Heart left ventricle (tissue), 16 donors: ENCODE measurements at regions of chr9 and their contacts with region 1.

Region 1: GRCh38 chr9:131334629-131335367 is 45.3 kb downstream of the PLPP7 start:
- DNase-seq: peak; percentile 82 to 91 (median 86)
- ATAC-seq: peak; percentile 88 to 92 (median 91)
- H3K4me3 ChIP-seq: no peak overlapping the region
- H3K27ac ChIP-seq: peak overlapping the region; percentile 11 to 93 (median 84)
- H3K4me1 ChIP-seq: peaks cover 0 to 33% (median 15%) of the 10 kb centered on the region in 12 donors
- H3K27me3 ChIP-seq: no peaks in the 10 kb centered on the region
- CTCF ChIP-seq: no peak
- POLR2A ChIP-seq: no peak

Region 2: GRCh38 chr9:131053896-131054295 is 280.9 kb before region 1 on chr9:
- intact Hi-C with region 1: loop called in 8 of 10 experiments (anchors 2 to 10 kb)
- DNase-seq: no peak
- ATAC-seq: no peak
- H3K4me3 ChIP-seq: no peak overlapping the region
- H3K27ac ChIP-seq: no peak overlapping the region
- H3K4me1 ChIP-seq: peaks cover 0 to 6% (median 0%) of the 10 kb centered on the region in 12 donors
- H3K27me3 ChIP-seq: peaks cover 0 to 10% (median 0%) of the 10 kb centered on the region in 9 donors
- CTCF ChIP-seq: no peak
- POLR2A ChIP-seq: no peak

Region 3: GRCh38 chr9:131178382-131178781 is 156.4 kb before region 1 on chr9:
- intact Hi-C with region 1: loop called (anchors 1 to 2 kb)
- DNase-seq: peak; percentile 64 to 83 (median 69)
- ATAC-seq: peak; percentile 82 to 96 (median 94)
- H3K4me3 ChIP-seq: no peak overlapping the region
- H3K27ac ChIP-seq: peak overlapping the region in 1 of 12 donors; percentile 31
- H3K4me1 ChIP-seq: peaks cover 0 to 29% (median 6%) of the 10 kb centered on the region in 12 donors
- H3K27me3 ChIP-seq: no peaks in the 10 kb centered on the region
- CTCF ChIP-seq: peak; percentile 87 to 96 (median 93)
- POLR2A ChIP-seq: no peak

Region 4: DNA sequence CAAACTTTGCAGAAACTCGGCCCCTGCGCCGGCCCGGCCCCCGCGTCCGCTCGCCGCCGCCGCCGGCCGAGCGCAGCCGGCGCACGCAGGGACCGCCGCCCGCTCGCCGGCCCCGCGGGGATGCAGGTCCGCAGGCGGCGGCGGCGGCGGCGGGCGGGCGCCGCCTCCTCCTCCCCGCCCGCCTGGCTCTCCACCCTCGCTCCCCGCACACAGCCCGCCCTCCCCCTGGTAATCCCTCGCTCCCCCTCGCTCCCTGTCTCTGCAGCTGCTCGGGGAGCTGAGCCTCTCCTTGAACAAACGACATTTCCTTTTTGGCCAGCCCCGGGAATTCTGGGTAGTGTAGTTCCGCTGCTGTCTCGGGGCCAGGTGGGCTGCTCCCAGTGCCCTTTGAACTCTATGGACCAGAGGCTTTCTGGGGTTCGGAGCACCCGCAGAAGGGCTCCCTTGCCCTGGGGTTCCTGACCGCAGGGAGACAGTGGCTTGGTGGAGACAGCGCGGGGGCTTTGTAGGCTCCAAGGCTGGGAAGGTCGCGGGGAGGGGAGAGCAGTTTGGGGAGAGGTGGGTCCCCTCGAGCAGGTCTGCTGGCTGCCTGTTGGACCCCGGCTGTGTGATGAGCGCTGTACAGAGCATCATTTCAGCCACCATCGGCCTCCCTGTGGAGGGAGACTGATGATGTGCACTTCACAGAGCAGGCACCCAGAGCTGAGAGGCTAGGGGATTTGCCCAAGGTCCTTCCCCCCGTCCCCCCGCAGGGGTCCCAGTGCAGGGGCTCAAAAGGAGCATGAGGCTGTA is 56.7 kb before region 1 on chr9:
- intact Hi-C with region 1: loop called in 7 of 10 experiments (anchors 2 to 10 kb)
- DNase-seq: peak; percentile 91 to 94 (median 92)
- ATAC-seq: peak; percentile 44 to 65 (median 58)
- H3K4me3 ChIP-seq: peak overlapping the region; percentile 69 to 96 (median 84)
- H3K27ac ChIP-seq: peak overlapping the region; percentile 88 to 99 (median 98)
- H3K4me1 ChIP-seq: peaks cover 4 to 63% (median 31%) of the 10 kb centered on the region in 12 donors
- H3K27me3 ChIP-seq: peaks cover 0 to 16% (median 0%) of the 10 kb centered on the region in 9 donors
- CTCF ChIP-seq: no peak
- POLR2A ChIP-seq: no peak

Region 5: GRCh38 chr9:131297903-131298302 is 36.9 kb before region 1 on chr9:
- intact Hi-C with region 1: loop called in 5 of 10 experiments (anchors 5 kb)
- DNase-seq: peak in 1 of 5 donors; percentile 57
- ATAC-seq: peak; percentile 57 to 78 (median 68)
- H3K4me3 ChIP-seq: no peak overlapping the region
- H3K27ac ChIP-seq: peak overlapping the region; percentile 72 to 98 (median 91)
- H3K4me1 ChIP-seq: peaks cover 0 to 91% (median 46%) of the 10 kb centered on the region in 12 donors
- H3K27me3 ChIP-seq: no peaks in the 10 kb centered on the region
- CTCF ChIP-seq: no peak
- POLR2A ChIP-seq: no peak